Aorta (tissue), 5 donors: ENCODE measurements at regions of chr14 and their contacts with region 1.

Region 1: GRCh38 chr14:24418492-24418873 is 11.0 kb downstream of the CBLN3 start:
- DNase-seq: no peak
- ATAC-seq: no peak
- H3K4me3 ChIP-seq: no peak overlapping the region
- H3K27ac ChIP-seq: no peak overlapping the region
- H3K4me1 ChIP-seq: no peaks in the 10 kb centered on the region
- H3K27me3 ChIP-seq: no peaks in the 10 kb centered on the region

Region 2: GRCh38 chr14:24251880-24252288 is 166.6 kb before region 1 on chr14:
- intact Hi-C with region 1: loop called in 1 of 2 experiments (anchors 5 kb)
- DNase-seq: no peak
- ATAC-seq: no peak
- H3K4me3 ChIP-seq: no peak overlapping the region
- H3K27ac ChIP-seq: no peak overlapping the region
- H3K4me1 ChIP-seq: no peaks in the 10 kb centered on the region
- H3K27me3 ChIP-seq: no peaks in the 10 kb centered on the region

Region 3: GRCh38 chr14:24315807-24316603 is 102.5 kb before region 1 on chr14:
- intact Hi-C with region 1: no loop called
- DNase-seq: peak; percentile 58 to 81
- ATAC-seq: peak; percentile 64
- H3K4me3 ChIP-seq: no peak overlapping the region
- H3K27ac ChIP-seq: no peak overlapping the region
- H3K4me1 ChIP-seq: no peaks in the 10 kb centered on the region
- H3K27me3 ChIP-seq: no peaks in the 10 kb centered on the region